Activated CD4-positive, alpha-beta memory T cell treated with anti-CD3 and anti-CD28 coated beads for 36 hours (primary cell): ENCODE measurements at regions of chr10 and their contacts with region 1.

Region 1: DNA sequence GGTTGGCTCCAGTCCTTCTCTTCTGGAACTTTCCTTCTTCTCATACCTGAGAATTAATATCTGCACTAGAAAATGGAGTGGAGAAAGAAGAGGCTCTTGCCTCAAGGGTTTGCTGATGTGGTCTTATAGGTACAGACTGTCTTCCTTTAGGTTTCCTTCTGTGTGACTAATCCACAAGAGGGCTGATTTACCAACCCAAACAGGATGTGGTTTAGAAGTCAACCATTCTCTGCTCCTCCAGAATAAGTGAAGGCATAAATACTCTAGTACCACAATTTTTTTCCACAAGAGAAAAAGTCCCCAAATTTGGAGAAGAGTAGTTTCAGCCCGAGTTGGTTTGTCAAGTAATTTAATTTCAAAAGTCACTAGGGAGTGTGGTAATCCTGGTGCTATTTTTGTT is 85.8 kb downstream of the NRP1 start:
- DNase-seq: no peak
- H3K4me3 Mint-ChIP-seq: peak overlapping the region; percentile 38
- H3K27ac Mint-ChIP-seq: peak overlapping the region; percentile 64
- H3K4me1 Mint-ChIP-seq: peaks cover 60% of the 10 kb centered on the region
- H3K27me3 Mint-ChIP-seq: peaks cover 11% of the 10 kb centered on the region

Region 2: DNA sequence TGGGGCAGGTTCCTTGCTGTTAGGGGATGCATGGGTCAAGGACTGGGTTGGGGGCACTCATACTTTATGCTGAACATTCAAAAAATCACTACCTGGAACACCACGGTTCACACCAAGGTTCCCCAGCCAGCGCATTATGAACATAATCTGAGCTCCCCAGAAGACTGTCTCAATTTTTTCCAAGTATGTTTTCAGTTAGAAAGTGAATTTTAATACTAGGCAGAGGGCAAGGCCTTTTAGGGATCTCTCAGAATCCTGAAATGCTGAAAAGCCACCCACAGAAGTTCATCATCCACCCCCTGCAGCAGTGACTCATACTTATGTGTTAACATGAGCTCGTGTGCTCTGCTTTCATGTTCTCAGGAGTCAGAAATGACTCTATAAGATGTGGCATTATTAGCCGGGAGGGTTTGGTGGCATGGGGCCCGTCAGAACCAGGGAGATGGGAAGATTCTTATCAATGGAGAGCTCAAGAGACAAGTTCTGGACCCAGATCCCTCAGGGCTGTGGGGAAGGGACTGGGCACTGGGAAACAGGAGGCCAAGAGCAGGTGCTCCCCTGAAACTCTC is 105.4 kb before region 1 on chr10:
- CTCF ChIA-PET with region 1: no interaction called
- POLR2A ChIA-PET with region 1: no interaction called
- intact Hi-C with region 1: loop called (anchors 1 kb)
- DNase-seq: peak; percentile 78
- H3K4me3 Mint-ChIP-seq: no peak overlapping the region
- H3K27ac Mint-ChIP-seq: peak overlapping the region; percentile 66
- H3K4me1 Mint-ChIP-seq: peaks cover 63% of the 10 kb centered on the region
- H3K27me3 Mint-ChIP-seq: peaks cover 1% of the 10 kb centered on the region

Region 3: DNA sequence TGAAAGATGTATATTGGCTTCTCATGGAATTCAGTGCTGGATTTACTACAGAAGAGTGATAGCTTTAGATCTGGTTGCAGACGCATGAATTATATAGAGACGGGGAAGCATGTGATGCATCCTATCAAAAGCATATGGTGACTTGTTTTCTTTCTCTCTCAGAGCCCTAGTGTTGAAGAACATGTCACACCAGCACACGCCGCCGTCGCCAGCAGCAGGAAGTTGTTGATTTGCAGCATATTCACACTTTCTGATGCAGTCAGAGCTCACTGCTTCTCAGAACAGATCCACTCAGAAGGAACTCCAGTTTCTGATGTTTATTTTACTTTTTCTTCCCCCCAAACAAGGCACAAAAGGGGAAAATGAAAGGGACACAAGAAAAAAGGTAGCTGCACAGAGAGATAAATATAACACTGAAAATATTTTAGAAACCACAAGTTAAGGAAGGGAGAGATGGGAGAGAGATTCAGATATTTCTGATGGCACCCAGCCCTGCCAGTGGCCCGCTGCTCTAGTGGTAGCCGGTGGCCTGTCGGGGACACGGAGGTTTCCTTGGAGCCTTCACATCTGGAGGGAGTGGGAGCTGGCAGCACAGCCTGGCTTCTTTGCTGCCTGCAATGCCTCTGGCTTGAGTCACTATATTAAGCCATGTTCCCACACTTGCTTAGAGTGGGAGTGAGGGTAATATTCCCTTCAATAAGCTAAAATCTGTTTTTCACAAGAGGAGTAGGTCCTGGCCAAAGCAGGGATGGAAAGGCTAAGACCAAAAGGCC is 37.3 kb before region 1 on chr10:
- CTCF ChIA-PET with region 1: no interaction called
- POLR2A ChIA-PET with region 1: no interaction called
- intact Hi-C with region 1: loop called (anchors 2 kb)
- DNase-seq: peak; percentile 56
- H3K4me3 Mint-ChIP-seq: no peak overlapping the region
- H3K27ac Mint-ChIP-seq: peak overlapping the region; percentile 36
- H3K4me1 Mint-ChIP-seq: peaks cover 20% of the 10 kb centered on the region
- H3K27me3 Mint-ChIP-seq: no peaks in the 10 kb centered on the region

Region 4: DNA sequence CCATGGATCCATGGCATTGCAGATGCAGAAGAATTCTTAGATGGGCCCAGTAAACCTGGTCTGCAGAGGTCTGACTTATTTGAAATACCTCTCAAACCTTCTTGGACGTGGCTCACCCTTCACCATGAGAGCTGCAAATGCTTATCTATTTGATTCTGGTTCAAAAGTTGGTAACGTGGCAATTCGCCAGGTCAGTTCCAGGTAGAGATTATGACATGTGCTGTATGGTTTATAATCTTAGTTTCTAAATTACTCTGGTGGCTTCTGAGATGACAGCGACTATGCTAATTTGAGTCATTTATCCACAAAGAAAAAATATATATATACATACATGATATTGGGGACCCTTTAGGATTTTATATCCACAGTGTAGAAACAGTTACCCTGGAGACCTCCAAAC is 17.0 kb after region 1 on chr10:
- CTCF ChIA-PET with region 1: interaction called, 4 read pairs
- POLR2A ChIA-PET with region 1: interaction called, 4 read pairs
- intact Hi-C with region 1: loop called (anchors 1 kb)
- DNase-seq: peak; percentile 77
- H3K4me3 Mint-ChIP-seq: no peak overlapping the region
- H3K27ac Mint-ChIP-seq: peak overlapping the region; percentile 13
- H3K4me1 Mint-ChIP-seq: peaks cover 28% of the 10 kb centered on the region
- H3K27me3 Mint-ChIP-seq: peaks cover 32% of the 10 kb centered on the region

Region 5: GRCh38 chr10:33306126-33306525 is 57.5 kb after region 1 on chr10:
- CTCF ChIA-PET with region 1: no interaction called
- POLR2A ChIA-PET with region 1: no interaction called
- intact Hi-C with region 1: no loop called
- DNase-seq: no peak
- H3K4me3 Mint-ChIP-seq: no peak overlapping the region
- H3K27ac Mint-ChIP-seq: no peak overlapping the region
- H3K4me1 Mint-ChIP-seq: peaks cover 2% of the 10 kb centered on the region
- H3K27me3 Mint-ChIP-seq: peaks cover 2% of the 10 kb centered on the region

Region 6: GRCh38 chr10:33509231-33509831 is 260.7 kb after region 1 on chr10:
- CTCF ChIA-PET with region 1: no interaction called
- POLR2A ChIA-PET with region 1: no interaction called
- intact Hi-C with region 1: loop called (anchors 5 kb)
- DNase-seq: peak; percentile 60
- H3K4me3 Mint-ChIP-seq: no peak overlapping the region
- H3K27ac Mint-ChIP-seq: no peak overlapping the region
- H3K4me1 Mint-ChIP-seq: peaks cover 13% of the 10 kb centered on the region
- H3K27me3 Mint-ChIP-seq: peaks cover 18% of the 10 kb centered on the region